ENCODE measurements at regions of chr10 and their contacts with region 1.

Region 1: DNA sequence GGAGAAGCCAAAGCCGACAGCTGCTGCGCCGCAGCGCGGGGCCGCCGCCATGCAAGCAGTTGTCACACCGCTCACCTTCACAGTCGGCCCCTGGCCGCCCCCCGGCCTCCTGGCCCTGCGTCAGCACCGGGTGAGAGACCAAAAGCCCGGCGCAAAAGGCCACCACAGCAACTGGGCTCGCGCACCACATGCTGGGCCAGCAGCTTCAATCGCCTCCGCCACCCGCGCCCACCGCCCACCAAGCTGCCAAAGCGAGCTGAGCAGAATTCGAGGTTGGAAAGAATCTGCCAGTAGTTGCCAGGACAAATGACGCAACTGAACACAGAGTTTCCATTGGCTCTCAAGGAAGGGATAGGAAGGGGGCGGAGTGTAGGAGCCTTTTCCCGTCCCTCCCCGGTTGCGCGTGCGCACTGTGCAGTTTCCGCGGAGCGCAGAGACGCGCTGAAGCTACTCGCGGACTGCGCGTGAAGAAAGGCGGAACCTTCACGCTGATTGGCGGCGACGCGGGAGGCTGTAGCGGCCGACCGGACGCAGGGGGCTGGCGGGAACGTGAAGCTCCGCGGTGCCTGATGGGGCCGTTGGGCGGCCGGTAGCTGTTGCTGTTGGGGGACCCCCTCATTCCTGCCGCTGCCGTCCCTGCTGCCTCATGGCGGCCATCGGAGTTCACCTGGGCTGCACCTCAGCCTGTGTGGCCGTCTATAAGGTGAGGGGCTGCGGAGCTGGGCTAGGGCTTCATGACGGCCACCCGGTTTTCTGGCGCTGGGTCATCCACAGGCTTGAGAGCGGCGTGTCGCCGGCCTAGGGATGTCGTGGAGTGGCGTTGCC is at the starts of genes CDNF, HSPA14 and MSANTD7:
- DNase-seq: peak; percentile 97
- ATAC-seq: peak; percentile 96
- H3K4me3 Mint-ChIP-seq: peak within 1 kb of the TSS; percentile 95
- H3K27ac Mint-ChIP-seq: peak within 1 kb of the TSS; percentile 91
- H3K4me1 Mint-ChIP-seq: peaks cover 25% of the 10 kb centered on the region
- H3K27me3 Mint-ChIP-seq: no peaks in the 10 kb centered on the region
- CTCF ChIP-seq: no peak
- total RNA-seq, gene CDNF: 0.49 and 0.98 TPM in 2 replicates
- total RNA-seq, gene HSPA14: 16.7 and 20.4 TPM in 2 replicates
- total RNA-seq, gene MSANTD7: 14.9 and 16.5 TPM in 2 replicates

Region 2: GRCh38 chr10:13787015-13787421 is 1051.0 kb before region 1 on chr10:
- CTCF ChIA-PET with region 1: no interaction called
- POLR2A ChIA-PET with region 1: interaction called, 3 read pairs
- intact Hi-C with region 1: loop called (anchors 5 kb)
- DNase-seq: peak; percentile 50
- ATAC-seq: peak; percentile 80
- H3K4me3 Mint-ChIP-seq: peak overlapping the region; percentile 80
- H3K27ac Mint-ChIP-seq: peak overlapping the region; percentile 97
- H3K4me1 Mint-ChIP-seq: peaks cover 57% of the 10 kb centered on the region
- H3K27me3 Mint-ChIP-seq: no peaks in the 10 kb centered on the region
- CTCF ChIP-seq: no peak

Region 3: DNA sequence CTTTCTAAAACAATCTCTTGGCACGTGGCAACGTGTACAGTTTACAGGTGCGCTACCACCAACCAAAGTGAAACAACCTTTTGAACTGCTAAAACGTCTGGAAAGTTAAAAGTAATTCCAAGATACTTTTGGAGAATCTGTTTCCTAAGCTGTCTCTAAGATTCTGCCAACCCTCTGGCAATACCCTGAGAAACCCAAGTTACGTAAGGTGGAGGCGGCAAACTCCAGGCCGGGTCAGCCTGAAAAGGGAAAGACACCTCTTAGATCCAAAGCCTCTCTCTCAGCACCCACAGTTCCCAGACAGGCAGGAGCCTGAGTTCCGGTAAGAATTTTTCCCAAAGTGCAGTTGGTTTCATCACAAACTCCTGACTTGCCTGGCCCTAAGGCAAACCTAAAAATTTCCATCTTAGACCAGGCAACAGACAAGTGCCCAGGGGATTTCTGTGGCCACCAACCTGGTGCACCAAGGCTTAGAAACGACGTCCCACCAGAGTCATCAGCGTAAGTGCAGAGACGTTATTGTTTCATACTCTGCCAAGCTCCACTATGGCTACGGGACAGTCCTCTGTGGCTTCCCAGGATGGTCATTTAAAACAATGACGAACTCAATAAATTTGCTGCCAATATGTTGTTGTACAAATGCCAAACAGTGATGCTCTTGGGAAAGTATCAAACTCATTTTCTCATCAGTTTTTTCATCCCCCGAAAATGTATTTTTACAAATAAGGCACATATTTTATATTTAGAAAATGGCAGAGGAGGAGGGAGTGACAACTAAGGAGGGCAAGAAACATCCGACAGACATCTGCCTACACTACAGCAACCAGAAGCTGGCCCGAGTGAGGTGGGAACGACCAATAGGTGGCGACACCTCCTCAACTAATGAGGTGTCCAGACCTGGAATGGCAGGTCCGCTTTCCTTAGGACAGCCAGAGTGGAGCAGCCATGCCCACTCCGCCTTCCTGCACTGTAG is 301.4 kb before region 1 on chr10:
- CTCF ChIA-PET with region 1: interaction called, 14 read pairs
- POLR2A ChIA-PET with region 1: no interaction called
- intact Hi-C with region 1: no loop called
- DNase-seq: no peak
- ATAC-seq: peak; percentile 60
- H3K4me3 Mint-ChIP-seq: no peak overlapping the region
- H3K27ac Mint-ChIP-seq: peak overlapping the region; percentile 41
- H3K4me1 Mint-ChIP-seq: peaks cover 37% of the 10 kb centered on the region
- H3K27me3 Mint-ChIP-seq: no peaks in the 10 kb centered on the region
- CTCF ChIP-seq: no peak

Region 4: DNA sequence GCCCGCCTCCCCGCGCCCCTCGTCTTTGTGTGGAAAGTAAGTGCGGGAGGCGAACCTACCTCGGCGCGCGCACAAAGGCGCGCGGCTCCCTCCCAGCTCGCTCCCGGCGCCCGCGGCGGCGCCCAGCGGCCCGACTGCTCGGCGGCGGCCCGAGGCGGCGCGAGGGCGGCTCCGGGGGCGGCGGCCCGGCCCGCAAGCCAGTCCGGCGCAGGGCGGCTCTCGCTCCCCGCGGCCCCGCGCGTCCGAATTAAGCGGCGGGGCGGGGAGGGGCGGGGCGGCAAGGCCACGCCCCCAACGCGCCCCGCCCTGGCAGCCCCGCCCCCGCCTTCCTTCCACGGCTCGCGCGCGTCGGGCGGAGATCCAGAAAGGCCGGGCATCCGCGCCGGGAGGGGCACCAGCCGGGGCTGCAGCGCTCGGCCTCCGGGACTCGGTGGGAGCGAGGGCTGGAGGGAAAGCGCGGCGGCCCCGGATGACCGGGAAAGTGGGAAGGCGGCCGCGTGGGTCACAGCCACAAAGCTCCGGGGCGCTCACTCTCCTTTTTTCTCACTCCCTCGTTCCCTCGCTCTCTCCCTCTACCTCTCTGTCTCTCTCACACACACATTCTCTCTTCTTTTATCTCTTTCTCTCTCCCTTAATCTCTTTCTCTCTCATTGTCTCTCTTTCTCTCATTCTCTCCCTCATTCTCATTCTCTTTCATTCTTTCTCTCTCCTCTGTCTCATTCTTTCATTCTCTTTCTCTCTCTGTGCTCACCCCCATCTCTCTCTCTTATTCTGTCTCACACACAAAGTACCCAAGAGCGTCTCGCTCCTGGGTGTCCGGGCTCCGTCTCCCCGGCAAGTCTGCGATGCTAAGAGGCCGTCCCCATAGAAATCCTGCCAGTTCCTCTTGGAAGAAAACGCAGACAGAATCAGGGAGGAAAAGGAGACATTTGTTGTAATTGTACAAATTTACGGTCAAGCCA is 233.5 kb before region 1 on chr10:
- CTCF ChIA-PET with region 1: no interaction called
- POLR2A ChIA-PET with region 1: interaction called, 10 read pairs
- intact Hi-C with region 1: loop called (anchors 1 kb)
- DNase-seq: peak; percentile 72
- ATAC-seq: peak; percentile 55
- H3K4me3 Mint-ChIP-seq: peak overlapping the region; percentile 86
- H3K27ac Mint-ChIP-seq: peak overlapping the region; percentile 94
- H3K4me1 Mint-ChIP-seq: peaks cover 68% of the 10 kb centered on the region
- H3K27me3 Mint-ChIP-seq: no peaks in the 10 kb centered on the region
- CTCF ChIP-seq: no peak

Region 5: DNA sequence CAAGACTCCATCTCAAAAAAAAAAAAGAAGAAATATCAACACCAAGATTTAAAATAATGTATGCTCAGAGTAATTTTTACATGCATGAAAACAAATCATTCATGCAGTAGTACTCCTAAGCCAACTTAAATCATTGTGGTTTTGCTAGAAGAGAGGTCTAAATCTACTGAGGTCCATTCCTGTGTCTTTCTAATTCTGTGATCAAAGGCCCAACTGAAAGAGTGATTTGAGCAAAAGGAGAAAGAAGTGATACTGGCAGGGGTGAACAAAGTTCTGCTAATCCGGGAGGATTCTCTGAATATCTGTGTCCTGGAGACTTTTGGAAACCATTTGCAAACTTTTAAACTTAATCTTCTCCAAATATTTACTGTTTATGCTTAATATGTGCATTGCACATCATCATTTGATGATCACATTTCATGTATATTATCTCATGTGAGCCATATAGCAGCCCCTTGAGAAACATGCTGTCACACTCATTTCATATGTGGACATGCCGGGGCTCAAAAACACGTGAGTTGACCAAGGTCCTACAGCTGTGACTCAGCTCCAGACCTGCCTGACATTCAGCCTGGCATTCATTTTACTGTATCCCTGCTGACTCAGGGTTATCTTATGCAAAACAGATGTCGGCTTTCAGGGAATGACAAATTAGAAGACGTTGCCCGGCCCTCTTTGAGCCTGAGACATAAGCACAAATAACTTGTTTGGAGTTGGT is 139.7 kb before region 1 on chr10:
- CTCF ChIA-PET with region 1: no interaction called
- POLR2A ChIA-PET with region 1: no interaction called
- intact Hi-C with region 1: no loop called
- DNase-seq: no peak
- ATAC-seq: no peak
- H3K4me3 Mint-ChIP-seq: no peak overlapping the region
- H3K27ac Mint-ChIP-seq: no peak overlapping the region
- H3K4me1 Mint-ChIP-seq: peaks cover 4% of the 10 kb centered on the region
- H3K27me3 Mint-ChIP-seq: no peaks in the 10 kb centered on the region
- CTCF ChIP-seq: no peak

Region 6: DNA sequence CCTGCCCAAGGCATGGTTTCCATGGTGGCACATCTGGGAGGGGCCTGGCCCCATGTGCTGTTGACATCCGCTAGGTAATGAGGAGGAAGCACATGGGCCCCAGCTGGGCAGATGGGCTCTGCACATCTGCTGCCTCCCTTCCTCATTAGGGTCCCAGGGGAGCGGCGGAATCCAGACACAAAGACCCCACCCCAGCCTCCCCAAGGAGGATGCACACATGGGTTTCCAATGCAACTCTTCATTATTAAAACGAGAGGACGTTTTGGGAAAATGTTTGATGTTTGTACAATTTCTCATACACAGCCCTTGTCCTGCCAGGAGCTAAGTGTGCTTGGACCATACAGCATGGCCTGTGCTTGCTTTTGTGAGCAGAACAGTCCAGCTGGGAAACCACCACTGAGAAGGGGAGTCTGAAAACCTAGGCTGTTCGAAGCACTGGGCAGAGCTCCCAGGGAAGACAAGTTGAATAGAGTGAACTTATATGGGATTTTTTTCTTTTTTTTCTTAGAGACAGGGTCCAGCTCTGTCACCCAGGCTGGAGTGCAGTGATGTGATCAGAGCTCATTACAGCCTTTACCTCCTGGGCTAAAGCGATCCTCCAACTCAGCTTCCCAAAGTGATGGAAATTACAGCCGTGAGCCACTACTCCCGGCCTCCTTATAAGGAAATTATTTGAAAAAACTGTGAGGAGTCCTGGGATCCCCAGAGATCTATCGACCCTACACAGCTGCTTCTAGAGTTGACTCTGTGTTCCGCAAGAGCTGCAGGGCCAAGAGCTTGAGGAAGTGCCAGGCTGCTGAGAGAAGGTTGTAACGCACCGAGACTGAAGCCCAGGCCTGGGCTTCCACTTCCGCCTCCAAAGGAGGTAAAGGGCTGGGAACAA is 86.7 kb before region 1 on chr10:
- CTCF ChIA-PET with region 1: interaction called, 3 read pairs
- POLR2A ChIA-PET with region 1: interaction called, 14 read pairs
- intact Hi-C with region 1: no loop called
- DNase-seq: peak; percentile 60
- ATAC-seq: peak; percentile 78
- H3K4me3 Mint-ChIP-seq: peak overlapping the region; percentile 70
- H3K27ac Mint-ChIP-seq: peak overlapping the region; percentile 97
- H3K4me1 Mint-ChIP-seq: peaks cover 71% of the 10 kb centered on the region
- H3K27me3 Mint-ChIP-seq: no peaks in the 10 kb centered on the region
- CTCF ChIP-seq: no peak

Region 7: GRCh38 chr10:14812271-14812670 is 25.7 kb before region 1 on chr10:
- CTCF ChIA-PET with region 1: no interaction called
- POLR2A ChIA-PET with region 1: no interaction called
- intact Hi-C with region 1: no loop called
- DNase-seq: no peak
- ATAC-seq: no peak
- H3K4me3 Mint-ChIP-seq: no peak overlapping the region
- H3K27ac Mint-ChIP-seq: no peak overlapping the region
- H3K4me1 Mint-ChIP-seq: peaks cover 11% of the 10 kb centered on the region
- H3K27me3 Mint-ChIP-seq: no peaks in the 10 kb centered on the region
- CTCF ChIP-seq: no peak

Region 8: DNA sequence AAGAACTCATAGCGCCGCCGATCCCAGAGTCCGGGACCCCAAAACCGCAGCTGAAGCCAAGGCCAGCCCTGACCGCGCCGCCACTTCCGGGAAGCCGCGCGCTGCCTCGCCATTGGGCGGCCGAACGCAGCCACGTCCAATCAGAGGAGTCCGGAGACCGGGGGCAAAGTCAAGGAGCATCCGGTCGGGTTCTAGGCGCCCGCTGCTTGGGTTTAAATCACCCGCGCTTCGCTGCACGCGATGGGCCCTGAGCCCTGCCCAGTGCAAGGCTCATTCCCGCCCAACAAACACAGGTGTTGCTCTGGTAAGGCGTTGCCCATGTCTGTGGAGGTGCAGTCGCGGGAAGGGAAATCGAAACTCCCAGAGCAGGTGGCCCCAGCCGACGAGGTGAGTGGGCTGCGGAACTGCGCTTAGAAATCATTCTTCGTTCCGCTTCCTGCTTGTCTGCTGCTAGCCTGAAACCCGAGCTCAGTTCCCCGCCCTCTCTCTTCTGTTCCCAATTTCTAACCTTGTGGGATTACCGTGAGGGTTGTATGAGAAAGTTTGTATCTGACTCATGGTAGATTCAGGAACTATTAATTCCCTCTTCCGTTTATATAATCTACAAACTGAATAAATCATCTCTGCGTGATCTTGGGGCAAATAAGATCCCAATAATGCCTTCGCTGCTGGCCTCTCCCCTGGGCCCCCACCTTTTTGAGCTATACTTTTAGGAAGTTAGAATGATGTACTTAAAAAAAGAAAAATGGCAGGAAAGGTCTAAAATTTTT is 116.2 kb after region 1 on chr10 and contains the start of gene DCLRE1C:
- CTCF ChIA-PET with region 1: interaction called, 3 read pairs
- POLR2A ChIA-PET with region 1: interaction called, 17 read pairs
- intact Hi-C with region 1: loop called (anchors 1 kb)
- DNase-seq: peak; percentile 77
- ATAC-seq: peak; percentile 78
- H3K4me3 Mint-ChIP-seq: peak within 1 kb of the TSS; percentile 90
- H3K27ac Mint-ChIP-seq: peak within 1 kb of the TSS; percentile 96
- H3K4me1 Mint-ChIP-seq: peaks cover 56% of the 10 kb centered on the region
- H3K27me3 Mint-ChIP-seq: no peaks in the 10 kb centered on the region
- CTCF ChIP-seq: no peak
- total RNA-seq, gene DCLRE1C: 38.0 and 43.8 TPM in 2 replicates

Region 9: DNA sequence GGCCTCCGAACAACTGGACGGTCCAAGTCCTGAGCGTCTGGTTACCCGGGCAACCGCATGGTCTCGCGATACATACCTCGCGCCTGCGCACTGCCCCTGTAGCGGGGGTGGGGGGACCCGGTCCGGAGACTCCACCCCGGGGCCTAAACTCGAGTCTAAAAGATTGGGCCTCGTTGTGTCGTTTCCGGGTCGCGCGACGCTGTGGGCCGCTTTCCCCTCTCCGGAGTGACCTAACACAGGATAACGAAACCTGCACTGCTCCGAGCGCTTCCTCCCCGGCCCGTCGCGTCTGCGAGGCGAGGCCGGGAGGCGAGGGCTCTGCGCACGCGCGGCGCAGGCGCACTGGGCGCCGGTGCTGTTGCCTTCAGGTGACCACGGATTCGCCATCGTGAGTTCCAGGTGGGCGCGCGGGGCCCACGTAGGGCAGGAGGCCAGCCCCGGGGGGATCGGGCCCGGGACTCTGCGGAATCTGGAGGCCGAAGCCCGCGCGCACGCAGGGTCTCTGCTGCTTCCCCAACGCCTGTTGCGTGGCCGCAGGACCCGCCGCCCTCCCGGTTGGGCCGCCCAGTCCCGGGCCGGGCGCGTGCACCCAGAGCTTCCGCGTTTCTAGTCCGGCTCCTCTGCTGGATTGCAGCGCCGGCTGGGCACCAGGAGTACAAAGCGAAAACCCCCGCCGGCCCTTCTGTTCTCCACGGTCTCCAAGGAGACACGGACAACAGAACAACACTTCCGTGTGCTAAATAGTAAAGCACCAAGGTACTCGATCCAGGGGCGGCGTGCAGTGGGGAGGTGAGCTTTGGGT is 259.2 kb after region 1 on chr10 and contains the start of gene RPP38:
- CTCF ChIA-PET with region 1: no interaction called
- POLR2A ChIA-PET with region 1: no interaction called
- intact Hi-C with region 1: loop called (anchors 1 kb)
- DNase-seq: peak; percentile 97
- ATAC-seq: peak; percentile 83
- H3K4me3 Mint-ChIP-seq: peak within 1 kb of the TSS; percentile 96
- H3K27ac Mint-ChIP-seq: peak within 1 kb of the TSS; percentile 93
- H3K4me1 Mint-ChIP-seq: peaks cover 29% of the 10 kb centered on the region
- H3K27me3 Mint-ChIP-seq: no peaks in the 10 kb centered on the region
- CTCF ChIP-seq: no peak
- total RNA-seq, gene RPP38: 21.2 and 27.9 TPM in 2 replicates

Measured in activated B cell treated with CpG ODN at 0.5 μM for 24 hours (primary cell).